Dorsolateral prefrontal cortex (tissue), 120 donors: ENCODE measurements at regions of chr2 and their contacts with region 1.

Region 1: GRCh38 chr2:8754106-8754776 is 72.4 kb downstream of the ID2 start:
- DNase-seq: peak in 5 of 10 donors; percentile 16 to 73 (median 39)
- H3K4me3 ChIP-seq: peak overlapping the region in 18 of 59 donors; percentile 0 to 48 (median 12)
- H3K27ac ChIP-seq: peak overlapping the region in 45 of 59 donors; percentile 1 to 81 (median 56)
- H3K27me3 ChIP-seq: no peaks in the 10 kb centered on the region
- CTCF ChIP-seq: peak in 17 of 56 donors; percentile 7 to 35 (median 18)

Region 2: GRCh38 chr2:8252997-8253694 is 501.1 kb before region 1 on chr2:
- intact Hi-C with region 1: loop called in 1 of 2 experiments (anchors 10 kb)
- DNase-seq: no peak
- H3K4me3 ChIP-seq: no peak overlapping the region
- H3K27ac ChIP-seq: no peak overlapping the region
- H3K27me3 ChIP-seq: peaks cover 0 to 10% (median 0%) of the 10 kb centered on the region in 45 donors
- CTCF ChIP-seq: no peak

Region 3: GRCh38 chr2:8324164-8324856 is 429.9 kb before region 1 on chr2:
- intact Hi-C with region 1: no loop called
- DNase-seq: no peak
- H3K4me3 ChIP-seq: no peak overlapping the region
- H3K27ac ChIP-seq: no peak overlapping the region
- H3K27me3 ChIP-seq: peaks cover 0 to 4% (median 0%) of the 10 kb centered on the region in 45 donors
- CTCF ChIP-seq: no peak

Region 4: DNA sequence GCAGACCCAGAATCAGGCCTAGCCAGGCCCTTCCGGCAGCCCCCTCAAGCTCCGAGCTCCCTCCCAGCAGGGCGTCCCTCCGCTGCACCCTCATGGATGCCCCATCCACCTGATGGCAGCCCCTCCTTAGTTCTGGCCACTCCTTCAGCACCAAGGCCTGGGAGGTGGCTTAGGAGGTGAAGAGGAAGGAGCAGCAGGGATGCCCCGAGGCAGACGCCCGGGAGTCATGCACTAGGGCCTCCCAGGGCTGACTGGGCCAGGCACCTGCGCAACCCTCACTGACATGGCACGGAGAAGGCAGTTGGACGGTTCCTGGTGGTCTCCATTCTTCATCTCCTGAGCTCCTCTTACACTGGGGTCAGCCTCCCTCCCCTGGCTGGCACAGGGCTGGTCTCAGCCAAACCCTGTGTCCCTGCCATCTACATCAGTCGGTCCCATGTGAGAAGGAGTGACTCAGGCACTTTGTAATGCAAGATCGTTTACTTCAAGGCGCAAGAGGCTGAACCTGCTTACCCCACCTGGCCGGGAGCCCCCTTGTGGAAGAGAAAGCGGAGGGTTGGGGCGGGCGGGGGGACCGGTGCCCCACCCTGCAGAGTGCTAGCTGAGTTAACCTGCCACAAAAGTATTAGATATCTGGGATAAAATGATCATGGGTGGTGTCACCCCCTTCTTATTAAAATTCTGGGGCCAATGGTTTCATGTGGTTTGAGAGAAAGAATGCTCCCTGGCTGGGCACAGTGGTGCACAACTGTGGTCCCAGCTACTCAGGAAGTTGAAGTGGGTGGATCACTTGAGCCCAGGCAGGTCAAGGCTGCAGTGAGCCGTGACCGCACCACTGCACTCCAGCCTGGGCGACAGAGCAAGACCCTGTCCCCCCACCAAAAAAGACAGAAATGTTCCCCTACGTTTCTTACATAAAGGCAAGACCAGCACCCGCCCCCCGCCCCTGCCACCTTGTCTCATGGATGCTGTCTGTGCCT is 125.7 kb before region 1 on chr2:
- intact Hi-C with region 1: loop called in 1 of 2 experiments (anchors 10 kb)
- DNase-seq: peak in 1 of 10 donors; percentile 26
- H3K4me3 ChIP-seq: no peak overlapping the region
- H3K27ac ChIP-seq: no peak overlapping the region
- H3K27me3 ChIP-seq: no peaks in the 10 kb centered on the region
- CTCF ChIP-seq: no peak

Region 5: GRCh38 chr2:9153643-9153980 is 399.4 kb after region 1 on chr2:
- intact Hi-C with region 1: no loop called
- DNase-seq: no peak
- H3K4me3 ChIP-seq: no peak overlapping the region
- H3K27ac ChIP-seq: no peak overlapping the region
- H3K27me3 ChIP-seq: no peaks in the 10 kb centered on the region
- CTCF ChIP-seq: no peak